ENCODE measurements at regions of chr3 and their contacts with region 1.

Region 1: GRCh38 chr3:119469381-119470189 is 822 bp downstream of the POGLUT1 start:
- DNase-seq: no peak
- ATAC-seq: no peak
- H3K4me3 ChIP-seq: peak overlapping the region; percentile 96
- H3K27ac ChIP-seq: peak overlapping the region; percentile 91
- H3K4me1 ChIP-seq: peaks cover 8% of the 10 kb centered on the region
- H3K27me3 ChIP-seq: no peaks in the 10 kb centered on the region
- CTCF ChIP-seq: no peak

Region 2: DNA sequence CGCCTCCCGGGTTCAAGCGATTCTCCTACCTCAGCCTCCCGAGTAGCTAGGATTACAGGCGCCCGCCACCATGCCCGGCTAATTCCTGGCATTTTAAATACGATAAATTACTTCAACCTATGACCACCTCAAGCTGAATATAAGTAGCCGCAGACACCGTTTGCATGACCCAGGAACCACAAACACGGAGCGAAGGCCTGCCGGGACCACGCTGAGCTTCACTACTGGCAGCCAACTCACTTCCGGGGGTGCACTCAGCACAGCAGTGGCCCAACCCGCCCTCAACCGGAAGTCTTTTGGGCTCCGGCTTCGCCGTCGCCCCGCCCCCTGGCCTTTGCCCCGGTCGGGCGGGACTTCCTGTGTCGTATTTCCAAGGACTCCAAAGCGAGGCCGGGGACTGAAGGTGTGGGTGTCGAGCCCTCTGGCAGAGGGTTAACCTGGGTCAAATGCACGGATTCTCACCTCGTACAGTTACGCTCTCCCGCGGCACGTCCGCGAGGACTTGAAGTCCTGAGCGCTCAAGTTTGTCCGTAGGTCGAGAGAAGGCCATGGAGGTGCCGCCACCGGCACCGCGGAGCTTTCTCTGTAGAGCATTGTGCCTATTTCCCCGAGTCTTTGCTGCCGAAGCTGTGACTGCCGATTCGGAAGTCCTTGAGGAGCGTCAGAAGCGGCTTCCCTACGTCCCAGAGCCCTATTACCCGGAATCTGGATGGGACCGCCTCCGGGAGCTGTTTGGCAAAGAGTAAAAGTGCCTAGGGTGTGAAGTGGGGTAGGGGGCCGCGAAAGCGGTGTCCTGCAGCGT is 28.8 kb after region 1 on chr3 and contains the start of gene TIMMDC1:
- intact Hi-C with region 1: loop called in 1 of 2 experiments (anchors 2 kb)
- DNase-seq: peak; percentile 98
- ATAC-seq: peak; percentile 98 to 99 (median 98)
- H3K4me3 ChIP-seq: peak within 1 kb of the TSS; percentile 97
- H3K27ac ChIP-seq: peak within 1 kb of the TSS; percentile 99
- H3K4me1 ChIP-seq: peaks cover 36% of the 10 kb centered on the region
- H3K27me3 ChIP-seq: no peaks in the 10 kb centered on the region
- CTCF ChIP-seq: no peak
- total RNA-seq, gene TIMMDC1: 147 to 198 (median 182) TPM

Measured in psoas muscle (tissue), 8 donors.